ENCODE measurements at regions of chrX and their contacts with region 1.

Region 1: GRCh38 chrX:48539345-48540027 is at the start of gene TBC1D25:
- DNase-seq: peak; percentile 97
- H3K4me3 ChIP-seq: peak within 1 kb of the TSS; percentile 52 to 88 (median 61)
- H3K27ac ChIP-seq: peak within 1 kb of the TSS; percentile 71
- H3K4me1 ChIP-seq: peaks cover 7% of the 10 kb centered on the region
- H3K27me3 ChIP-seq: no peaks in the 10 kb centered on the region
- CTCF ChIP-seq: peak; percentile 23 to 44
- POLR2A ChIP-seq: no peak
- total RNA-seq, gene TBC1D25: 14.4 and 16.3 TPM in 2 replicates

Region 2: DNA sequence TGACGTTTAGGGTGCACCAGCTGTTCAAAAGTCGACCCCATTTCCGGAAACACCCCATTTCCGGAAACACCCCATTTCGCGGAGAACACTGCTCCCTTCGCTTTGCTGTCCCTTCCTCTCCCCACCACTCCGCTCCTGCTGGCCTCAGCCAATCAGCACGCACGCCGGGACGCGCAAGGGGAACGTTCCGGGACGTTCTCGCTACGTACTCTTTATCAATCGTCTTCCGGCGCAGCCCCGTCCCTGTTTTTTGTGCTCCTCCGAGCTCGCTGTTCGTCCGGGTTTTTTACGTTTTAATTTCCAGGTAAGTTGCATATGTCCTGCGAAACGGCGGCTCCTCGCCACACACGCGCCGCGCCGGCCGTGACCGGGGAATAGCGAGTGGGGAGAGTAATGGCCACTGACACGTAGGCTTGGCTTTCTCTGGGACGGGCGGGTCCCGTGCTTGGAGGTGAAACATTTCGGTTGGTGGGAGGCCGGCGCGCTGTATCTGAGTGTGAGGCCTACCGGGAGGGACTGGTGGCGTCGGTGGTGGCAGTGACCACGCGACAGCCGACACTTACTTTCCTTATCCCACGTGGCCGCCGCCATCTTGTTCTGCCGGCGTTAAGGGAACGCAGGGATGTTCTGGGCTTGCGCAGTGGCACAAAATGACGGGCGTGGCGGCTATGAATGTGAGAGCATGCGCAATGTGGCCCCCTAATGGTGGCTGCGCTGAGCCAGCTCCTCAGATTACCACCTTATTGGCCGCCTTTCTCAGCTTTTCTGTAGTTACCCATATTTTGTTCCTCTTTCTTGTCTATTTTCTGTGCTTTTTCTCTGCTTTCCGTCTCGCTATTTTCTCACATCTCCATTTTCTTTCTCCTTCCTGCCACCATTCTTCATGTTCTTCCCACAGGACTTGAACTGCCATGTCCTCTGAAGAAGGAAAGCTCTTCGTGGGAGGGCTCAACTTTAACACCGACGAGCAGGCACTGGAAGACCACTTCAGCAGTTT is 35.1 kb after region 1 on chrX and contains the start of gene RBM3:
- CTCF ChIA-PET with region 1: no interaction called
- POLR2A ChIA-PET with region 1: interaction called, 7 read pairs
- dilution Hi-C with region 1: no loop called
- intact Hi-C with region 1: loop called (anchors 1 kb)
- DNase-seq: peak; percentile 90
- H3K4me3 ChIP-seq: peak within 1 kb of the TSS; percentile 60 to 96 (median 75)
- H3K27ac ChIP-seq: peak within 1 kb of the TSS; percentile 95
- H3K4me1 ChIP-seq: peaks cover 26% of the 10 kb centered on the region
- H3K27me3 ChIP-seq: no peaks in the 10 kb centered on the region
- CTCF ChIP-seq: peak in 1 of 2 donors; percentile 48
- POLR2A ChIP-seq: peak; percentile 80
- total RNA-seq, gene RBM3: 477 and 485 TPM in 2 replicates

Region 3: GRCh38 chrX:48648336-48648751 is 108.9 kb after region 1 on chrX:
- CTCF ChIA-PET with region 1: no interaction called
- POLR2A ChIA-PET with region 1: no interaction called
- dilution Hi-C with region 1: no loop called
- intact Hi-C with region 1: no loop called
- DNase-seq: peak; percentile 43
- H3K4me3 ChIP-seq: no peak overlapping the region
- H3K27ac ChIP-seq: no peak overlapping the region
- H3K4me1 ChIP-seq: no peaks in the 10 kb centered on the region
- H3K27me3 ChIP-seq: peaks cover 0 to 2% of the 10 kb centered on the region in 2 experiments
- CTCF ChIP-seq: peak in 1 of 2 donors; percentile 15
- POLR2A ChIP-seq: no peak

Region 4: GRCh38 chrX:48976086-48976485 is 436.6 kb after region 1 on chrX:
- CTCF ChIA-PET with region 1: no interaction called
- POLR2A ChIA-PET with region 1: no interaction called
- dilution Hi-C with region 1: no loop called
- intact Hi-C with region 1: no loop called
- DNase-seq: no peak
- H3K4me3 ChIP-seq: no peak overlapping the region
- H3K27ac ChIP-seq: no peak overlapping the region
- H3K4me1 ChIP-seq: peaks cover 3% of the 10 kb centered on the region
- H3K27me3 ChIP-seq: no peaks in the 10 kb centered on the region
- CTCF ChIP-seq: no peak
- POLR2A ChIP-seq: no peak

Measured in endothelial cell of umbilical vein (primary cell).